ENCODE measurements at regions of chr4 and their contacts with region 1.

Region 1: DNA sequence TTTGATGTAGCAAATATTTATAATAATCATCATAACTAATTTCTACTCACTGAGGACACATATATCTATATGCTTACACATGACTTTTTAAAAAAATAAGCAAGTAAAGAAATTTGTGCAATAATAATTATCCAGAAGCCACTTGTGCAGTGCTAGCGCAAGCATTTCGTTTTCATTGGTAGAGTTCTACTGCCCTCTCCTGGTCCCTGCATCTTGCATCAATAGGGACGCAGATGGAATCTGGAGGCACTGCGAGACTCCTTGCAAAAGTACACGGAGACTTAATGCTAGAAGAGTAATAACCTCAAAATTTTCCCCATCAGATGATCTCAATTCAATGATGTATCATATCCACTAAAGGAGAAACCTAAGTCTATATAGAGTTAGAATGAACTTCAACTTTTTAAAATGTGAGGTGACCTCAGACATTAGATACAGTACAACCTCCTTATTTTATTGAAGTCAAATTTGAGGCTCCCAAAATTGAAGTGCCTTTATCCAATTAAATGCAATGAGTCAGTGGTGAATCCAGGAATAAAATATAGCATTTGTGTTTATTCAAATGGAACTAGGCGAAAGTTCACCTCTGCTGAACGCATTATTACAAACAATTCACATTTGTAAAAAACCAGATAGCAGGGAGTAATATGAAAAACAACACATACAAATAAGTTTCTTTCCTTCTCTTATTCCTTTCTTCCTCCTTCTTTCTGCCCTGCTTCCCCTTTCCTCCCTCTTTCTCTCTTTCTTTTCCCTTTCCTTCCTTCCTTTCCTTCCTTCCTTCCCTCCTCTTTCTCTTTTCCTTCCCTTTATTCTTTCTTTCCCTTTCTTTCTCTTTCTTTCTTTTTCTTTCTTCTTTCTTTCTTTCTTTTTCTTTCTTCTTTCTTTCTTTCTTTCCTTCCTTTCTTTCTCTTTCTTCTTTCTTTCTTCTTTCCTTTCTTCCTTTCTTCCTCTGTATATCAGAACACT is 450.0 kb downstream of the ANKRD50 start:
- DNase-seq: peak; percentile 33
- CTCF ChIP-seq: peak; percentile 88

Region 2: DNA sequence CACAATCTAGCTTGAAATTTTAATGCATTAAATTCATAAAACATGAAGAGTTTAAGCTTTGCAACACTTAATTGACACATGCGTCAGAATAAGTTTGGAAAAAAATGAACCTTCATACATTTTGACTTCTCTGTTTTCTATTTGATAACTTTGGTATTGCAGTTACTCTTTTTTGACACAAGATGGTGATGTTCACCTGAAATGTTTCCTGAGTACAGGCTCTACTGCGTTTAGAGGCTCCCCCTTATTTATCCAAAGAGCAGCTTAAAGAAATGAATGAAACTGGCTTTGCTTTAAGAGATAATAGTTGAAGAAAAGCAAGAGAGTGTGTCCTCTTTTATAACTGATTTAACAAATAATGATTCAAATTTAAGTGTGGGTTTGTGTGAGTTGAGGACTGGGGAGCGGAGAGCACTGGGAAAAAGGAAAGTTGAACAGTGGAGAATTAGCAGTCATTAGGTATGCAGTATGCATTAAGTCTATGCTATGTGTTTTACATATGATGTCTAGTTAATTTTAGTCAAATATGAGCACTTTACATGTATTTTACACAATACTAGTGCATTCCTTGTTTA is 1159.5 kb before region 1 on chr4:
- in situ Hi-C with region 1: loop called (anchors 25 kb)
- DNase-seq: peak; percentile 59
- CTCF ChIP-seq: peak; percentile 66

Region 3: DNA sequence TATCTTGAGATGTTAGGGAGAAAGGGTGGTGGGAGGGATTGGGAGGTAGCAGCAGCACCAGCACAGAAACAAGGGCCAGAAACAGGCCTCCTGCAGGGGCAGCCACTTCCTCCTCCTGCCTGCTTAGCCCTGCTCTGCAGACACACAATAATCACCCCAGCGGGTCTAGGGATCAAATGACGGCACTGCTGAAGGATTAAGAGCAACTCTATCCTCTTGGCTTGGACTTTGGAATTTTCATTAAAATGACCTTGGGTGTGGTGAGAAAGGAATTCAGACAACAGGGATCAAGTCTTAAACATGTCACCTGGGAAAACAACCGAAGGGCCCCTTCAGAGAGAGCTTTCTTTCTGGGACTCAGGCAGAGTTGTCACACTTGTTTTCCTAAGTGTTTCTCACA is 512.5 kb before region 1 on chr4:
- in situ Hi-C with region 1: loop called (anchors 25 kb)
- DNase-seq: no peak
- CTCF ChIP-seq: no peak

Measured in GM13977 (cell line).